ENCODE measurements at regions of chr2 and their contacts with region 1.

Region 1: GRCh38 chr2:241637000-241637791 is at the starts of genes ATG4B and THAP4:
- DNase-seq: peak; percentile 56 to 93 (median 86)

Region 2: GRCh38 chr2:241686649-241687425 is 49.6 kb after region 1 on chr2 and contains the start of gene DTYMK:
- intact Hi-C with region 1: loop called (anchors 2 kb)
- DNase-seq: peak; percentile 92 to 98 (median 97)

Measured in head of caudate nucleus (tissue), 42 donors.